HepG2 (cell line): ENCODE measurements at regions of chr19 and their contacts with region 1.

Region 1: DNA sequence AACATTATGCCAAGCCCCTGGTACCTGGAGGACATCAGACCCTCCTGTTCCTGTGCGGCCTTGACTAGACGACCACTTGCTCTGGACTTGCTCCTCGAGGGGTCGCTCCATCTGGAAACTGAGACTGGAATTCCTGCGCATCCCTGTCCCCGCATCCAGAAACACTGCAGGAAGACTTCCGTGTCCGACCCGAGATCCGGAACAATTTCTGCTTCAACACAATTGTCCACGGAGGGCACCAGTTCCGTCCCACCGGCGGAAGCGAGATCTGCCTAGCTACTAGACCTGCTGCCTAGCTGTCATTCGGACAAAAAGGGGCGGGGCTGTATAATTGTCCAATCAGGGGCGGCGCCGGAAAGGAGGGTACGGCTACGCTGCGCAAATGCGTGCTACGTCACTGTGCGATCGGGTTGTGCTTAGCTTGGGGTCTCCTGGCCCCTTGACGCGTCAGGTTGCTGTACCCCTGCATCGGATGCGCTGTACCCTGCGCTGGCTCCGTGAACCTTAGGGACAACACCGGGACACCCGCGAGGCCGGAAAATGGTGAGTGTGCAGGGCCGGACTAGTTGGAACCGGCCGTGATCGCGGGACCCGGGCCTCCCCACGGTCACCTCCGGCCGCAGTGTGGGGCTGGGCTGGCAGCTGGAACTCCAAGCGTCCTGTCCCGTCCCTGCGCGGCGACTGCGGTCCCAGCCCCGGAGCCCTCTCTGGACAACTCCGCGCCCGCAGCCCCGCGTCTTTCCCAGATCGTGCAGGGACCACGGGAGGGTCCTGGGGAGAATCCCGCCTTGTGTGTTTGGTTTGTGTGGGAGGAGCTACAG is at the starts of genes ZNF490 and ZNF791:
- DNase-seq: peak; percentile 97
- ATAC-seq: peak; percentile 98
- H3K4me3 ChIP-seq: peak within 1 kb of the TSS; percentile 79 to 97 (median 94)
- H3K27ac ChIP-seq: peak within 1 kb of the TSS; percentile 88
- H3K4me1 ChIP-seq: peaks cover 9% of the 10 kb centered on the region; the same call in 1 of the 2 replicates
- H3K27me3 ChIP-seq: no peaks in the 10 kb centered on the region; a peak in 1 of 5 replicates
- CTCF ChIP-seq: peak; percentile 40
- EP300 ChIP-seq: peak in 1 of 2 experiments; percentile 68; a peak in 2 of 4 replicates
- POLR2A ChIP-seq: peak; percentile 84 to 92
- RAD21 ChIP-seq: no peak; the same call in 1 of the 2 replicates
- total RNA-seq, gene ZNF490: 2.9 and 5.2 TPM in 2 replicates
- total RNA-seq, gene ZNF791: 17.4 and 21.3 TPM in 2 replicates

Region 2: GRCh38 chr19:12551060-12551832 is 59.5 kb before region 1 on chr19 and contains the start of gene ZNF564:
- CTCF ChIA-PET with region 1: no interaction called
- POLR2A ChIA-PET with region 1: interaction called, 6 read pairs
- in situ Hi-C with region 1: no loop called
- intact Hi-C with region 1: loop called (anchors 5 kb)
- DNase-seq: peak; percentile 100
- ATAC-seq: peak; percentile 96
- H3K4me3 ChIP-seq: peak within 1 kb of the TSS; percentile 86 to 92 (median 91)
- H3K27ac ChIP-seq: peak within 1 kb of the TSS; percentile 93
- H3K4me1 ChIP-seq: peaks cover 44% of the 10 kb centered on the region
- H3K27me3 ChIP-seq: no peaks in the 10 kb centered on the region; a peak in 1 of 5 replicates
- CTCF ChIP-seq: peak; percentile 6; the same call in 1 of the 2 replicates
- EP300 ChIP-seq: peak in 1 of 2 experiments; percentile 22; a peak in 2 of 4 replicates
- POLR2A ChIP-seq: peak; percentile 80 to 95
- RAD21 ChIP-seq: 0 out of 2 replicates have a peak, but pooled peaks have one; percentile 26
- total RNA-seq, gene ZNF564: 11.1 and 11.2 TPM in 2 replicates

Region 3: DNA sequence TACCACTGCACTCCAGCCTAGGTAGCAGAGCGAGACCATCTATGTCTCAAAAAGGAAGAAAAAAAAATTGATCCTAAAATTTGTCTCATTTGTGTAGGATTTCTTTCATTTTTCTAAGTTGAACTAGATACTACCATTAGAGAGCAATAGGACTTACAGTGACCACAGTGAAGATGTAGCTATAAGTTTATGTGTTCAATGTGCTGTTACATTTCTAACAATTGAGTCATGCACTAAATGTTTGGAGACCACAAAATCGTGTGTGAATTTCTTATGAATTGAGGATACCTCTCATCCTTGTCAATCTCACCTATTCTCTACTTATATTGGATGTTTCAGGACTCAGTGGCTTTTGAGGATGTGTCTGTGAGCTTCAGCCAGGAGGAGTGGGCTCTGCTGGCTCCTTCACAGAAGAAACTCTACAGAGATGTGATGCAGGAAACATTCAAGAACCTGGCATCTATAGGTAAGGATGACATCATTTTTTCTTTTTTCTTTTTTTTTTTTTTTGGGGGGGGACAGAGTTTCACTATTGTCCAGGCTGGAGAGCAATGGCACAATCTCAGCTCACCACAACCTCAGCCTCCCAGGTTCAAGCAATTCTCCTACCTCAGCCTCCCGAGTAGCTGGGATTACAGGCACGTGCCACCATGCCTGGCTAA is 12.7 kb after region 1 on chr19:
- CTCF ChIA-PET with region 1: no interaction called
- POLR2A ChIA-PET with region 1: interaction called, 11 read pairs
- in situ Hi-C with region 1: no loop called
- intact Hi-C with region 1: no loop called
- DNase-seq: no peak
- ATAC-seq: no peak
- H3K4me3 ChIP-seq: no peak overlapping the region
- H3K27ac ChIP-seq: no peak overlapping the region
- H3K4me1 ChIP-seq: peaks cover 27% of the 10 kb centered on the region
- H3K27me3 ChIP-seq: no peaks in the 10 kb centered on the region
- CTCF ChIP-seq: no peak
- EP300 ChIP-seq: no peak
- POLR2A ChIP-seq: no peak
- RAD21 ChIP-seq: no peak

Region 4: DNA sequence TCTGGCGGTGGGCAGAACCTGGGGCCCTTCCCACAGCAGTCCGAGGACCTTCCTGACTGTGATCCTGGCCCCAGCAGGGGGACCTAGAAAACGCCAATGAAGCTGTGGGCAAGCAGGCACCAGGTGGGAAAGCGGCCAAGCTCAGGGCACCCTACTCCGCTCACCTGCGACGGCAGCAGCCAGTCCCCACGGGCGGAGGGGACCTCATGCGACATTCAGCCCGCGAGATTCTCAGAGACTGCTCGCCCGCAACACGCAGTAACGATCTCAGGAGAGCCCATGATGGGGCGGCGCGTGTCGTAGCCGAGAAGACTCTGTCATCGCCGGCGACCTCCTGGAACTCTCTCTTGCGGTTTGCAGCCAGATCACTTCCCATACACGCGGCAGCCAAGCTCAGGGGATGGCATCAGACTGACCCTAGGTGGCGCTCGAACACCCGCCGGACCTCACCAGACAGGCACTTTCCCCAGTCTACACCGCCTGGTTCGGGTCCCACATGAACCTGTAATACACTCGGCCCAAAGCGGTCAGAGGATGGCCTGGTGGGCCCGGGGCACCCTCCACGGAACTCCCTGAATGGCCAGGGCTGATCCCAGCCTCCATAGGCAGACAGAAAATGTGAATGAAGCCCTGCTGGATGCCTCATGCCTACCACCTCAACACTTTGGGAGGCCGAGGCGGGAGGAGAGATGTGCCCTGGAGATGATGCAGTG is 29.3 kb after region 1 on chr19:
- CTCF ChIA-PET with region 1: no interaction called
- POLR2A ChIA-PET with region 1: interaction called, 10 read pairs
- in situ Hi-C with region 1: no loop called
- intact Hi-C with region 1: no loop called
- DNase-seq: peak; percentile 67
- ATAC-seq: peak; percentile 93
- H3K4me3 ChIP-seq: peak overlapping the region in 2 of 3 experiments; percentile 42 to 46; a peak in 5 of 6 replicates
- H3K27ac ChIP-seq: peak overlapping the region; percentile 9
- H3K4me1 ChIP-seq: peaks cover 11% of the 10 kb centered on the region; the same call in 1 of the 2 replicates
- H3K27me3 ChIP-seq: no peaks in the 10 kb centered on the region
- CTCF ChIP-seq: peak; percentile 94
- EP300 ChIP-seq: no peak
- POLR2A ChIP-seq: no peak
- RAD21 ChIP-seq: peak; percentile 55; the same call in 1 of the 2 replicates

Region 5: DNA sequence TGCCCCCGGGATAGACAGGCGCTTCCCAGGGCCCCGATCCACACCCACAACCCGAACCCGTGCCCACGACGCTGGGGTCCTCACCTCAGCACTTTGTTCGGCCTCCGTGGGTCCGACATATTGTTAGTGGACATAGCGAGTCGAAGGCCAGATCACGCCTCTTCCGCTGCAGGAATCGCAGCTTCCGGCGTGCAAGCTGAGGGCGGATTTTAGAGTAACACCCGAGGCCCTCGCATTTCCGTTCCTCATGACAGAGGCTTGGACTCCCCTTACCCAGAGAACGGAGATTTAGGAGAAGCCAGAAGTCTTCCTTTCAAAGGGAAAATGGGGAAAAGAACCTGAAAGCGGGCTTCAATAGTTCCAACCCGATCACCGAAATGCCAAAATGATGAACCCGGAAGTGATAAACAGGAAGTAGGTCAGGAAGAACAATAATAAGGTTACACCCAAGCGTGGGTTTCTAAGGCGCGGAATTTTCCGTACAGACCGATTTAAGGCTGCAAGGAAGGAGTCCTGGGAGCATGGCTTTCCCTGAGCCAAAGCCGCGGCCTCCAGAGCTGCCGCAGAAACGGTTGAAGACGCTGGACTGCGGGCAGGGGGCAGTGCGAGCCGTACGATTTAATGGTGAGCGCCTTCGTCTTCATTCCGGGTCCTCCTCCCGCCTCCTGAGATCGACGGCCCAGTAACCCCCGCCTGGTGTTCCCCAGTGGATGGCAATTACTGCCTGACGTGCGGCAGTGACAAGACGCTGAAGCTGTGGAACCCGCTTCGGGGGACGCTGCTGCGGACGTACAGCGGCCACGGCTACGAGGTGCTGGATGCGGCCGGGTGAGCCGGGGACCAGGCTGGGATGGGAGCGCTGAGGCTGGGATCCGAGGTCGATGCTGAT is 58.8 kb after region 1 on chr19:
- CTCF ChIA-PET with region 1: no interaction called
- POLR2A ChIA-PET with region 1: interaction called, 16 read pairs
- in situ Hi-C with region 1: no loop called
- intact Hi-C with region 1: no loop called
- DNase-seq: peak; percentile 67
- ATAC-seq: peak; percentile 50
- H3K4me3 ChIP-seq: peak overlapping the region; percentile 77 to 96 (median 96)
- H3K27ac ChIP-seq: peak overlapping the region; percentile 88
- H3K4me1 ChIP-seq: peaks cover 43% of the 10 kb centered on the region
- H3K27me3 ChIP-seq: no peaks in the 10 kb centered on the region; a peak in 1 of 5 replicates
- CTCF ChIP-seq: no peak
- EP300 ChIP-seq: peak in 1 of 2 experiments; percentile 22; a peak in 1 of 4 replicates
- POLR2A ChIP-seq: peak; percentile 66 to 77
- RAD21 ChIP-seq: no peak